Prostate gland (tissue), 2 donors: ENCODE measurements at regions of chr10 and their contacts with region 1.

Region 1: DNA sequence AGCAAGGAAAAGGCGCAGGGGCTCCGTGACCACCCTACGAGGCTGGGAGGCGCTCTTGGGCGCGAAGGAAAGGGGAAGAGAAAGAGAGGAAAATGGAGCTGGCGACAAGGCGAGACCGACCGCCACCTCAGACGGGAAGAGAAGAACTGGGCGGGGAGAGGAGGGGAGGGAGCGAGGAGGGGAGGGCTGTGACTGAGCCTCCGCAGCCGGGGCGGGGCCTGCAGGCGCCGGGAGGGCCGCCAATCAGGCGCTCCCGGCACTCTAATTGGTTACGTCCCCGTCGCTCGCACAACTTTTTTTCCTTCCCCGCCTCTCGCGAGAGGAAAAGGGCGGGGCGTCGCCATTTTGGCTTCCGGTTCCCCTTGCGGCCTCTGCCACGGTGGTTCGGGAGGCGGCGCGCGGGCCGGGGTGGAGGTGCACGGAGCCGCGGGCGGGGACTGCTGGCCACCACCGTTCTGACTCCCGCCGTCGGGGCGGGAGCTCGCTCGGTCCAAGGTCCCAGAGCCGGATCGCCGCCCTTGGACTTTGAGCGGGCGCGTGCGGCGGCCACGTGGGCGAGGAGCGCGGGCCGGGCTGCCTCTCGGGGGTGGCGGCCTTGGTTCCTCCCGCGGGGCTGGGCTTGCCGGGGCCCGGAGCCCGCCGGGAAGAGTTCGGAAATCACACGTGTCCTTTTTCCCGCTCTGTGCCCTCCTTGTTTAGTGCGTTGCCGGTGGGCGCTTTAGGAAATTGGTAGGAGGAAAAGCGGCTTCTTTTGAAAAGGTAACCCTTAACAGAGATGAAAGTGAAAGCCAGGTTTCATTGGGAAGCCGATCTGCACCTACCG is at the start of gene GDI2:
- DNase-seq: peak; percentile 95
- H3K4me3 ChIP-seq: peak within 1 kb of the TSS; percentile 74 to 95
- H3K27ac ChIP-seq: peak within 1 kb of the TSS; percentile 89 to 96
- H3K4me1 ChIP-seq: peaks cover 5% of the 10 kb centered on the region
- H3K27me3 ChIP-seq: no peaks in the 10 kb centered on the region
- CTCF ChIP-seq: peak in 1 of 4 experiments; percentile 28
- POLR2A ChIP-seq: peak; percentile 91
- total RNA-seq, gene GDI2: 186 to 218 TPM

Region 2: DNA sequence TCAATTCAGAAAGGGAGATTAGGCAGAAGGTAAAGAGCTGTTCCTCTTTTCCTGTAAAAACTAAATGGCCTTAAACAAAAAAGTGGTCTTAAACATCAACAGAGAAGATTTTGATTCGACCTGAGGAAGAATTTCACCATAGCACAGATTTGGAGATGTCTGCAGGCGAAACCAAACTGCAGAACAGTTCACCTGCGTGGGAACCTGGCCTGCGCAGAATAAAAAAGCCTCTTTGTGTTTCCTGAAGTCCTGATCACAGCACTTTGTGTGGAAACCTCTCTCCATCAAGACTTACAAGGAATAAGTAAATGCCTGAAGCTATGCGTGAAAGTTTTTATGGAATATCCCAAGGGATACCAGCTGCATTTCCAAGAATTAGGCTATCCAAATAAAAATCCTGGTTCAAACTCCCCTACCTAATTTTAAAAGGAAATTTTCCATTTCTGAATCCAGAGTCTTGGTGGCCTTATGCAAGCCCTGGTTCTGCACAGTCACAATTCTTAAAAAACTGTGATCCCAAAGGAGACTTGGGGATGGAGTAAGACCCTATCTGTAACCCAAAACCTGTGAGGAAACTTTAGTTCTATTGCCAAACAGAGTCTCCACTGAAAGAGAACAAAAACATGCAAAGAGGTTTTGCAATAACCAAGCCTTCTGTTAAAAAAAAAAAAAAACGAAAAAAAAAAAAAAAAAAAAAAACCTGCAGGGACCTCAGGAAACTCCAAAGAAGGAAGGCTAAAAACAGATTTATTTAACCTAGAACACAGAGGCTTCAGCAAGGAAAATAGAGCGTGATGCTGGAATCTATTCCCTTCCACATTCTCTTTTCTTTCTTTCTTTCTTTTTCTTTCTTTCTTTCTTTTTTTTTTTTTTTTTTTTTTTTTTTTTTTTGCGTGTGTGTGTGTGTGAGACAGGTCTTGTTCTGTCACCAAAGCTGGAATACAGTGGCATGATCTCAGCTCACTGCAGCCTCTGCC is 278.3 kb before region 1 on chr10:
- intact Hi-C with region 1: loop called (anchors 10 kb)
- DNase-seq: no peak
- H3K4me3 ChIP-seq: no peak overlapping the region
- H3K27ac ChIP-seq: peak overlapping the region in 1 of 2 donors; percentile 18
- H3K4me1 ChIP-seq: no peaks in the 10 kb centered on the region
- H3K27me3 ChIP-seq: no peaks in the 10 kb centered on the region
- CTCF ChIP-seq: no peak
- POLR2A ChIP-seq: no peak

Region 3: GRCh38 chr10:5684318-5684970 is 129.1 kb before region 1 on chr10 and contains the start of gene TASOR2:
- intact Hi-C with region 1: loop called (anchors 1 kb)
- DNase-seq: peak; percentile 94
- H3K4me3 ChIP-seq: peak within 1 kb of the TSS; percentile 87 to 96
- H3K27ac ChIP-seq: peak within 1 kb of the TSS; percentile 87 to 88
- H3K4me1 ChIP-seq: peaks cover 6% of the 10 kb centered on the region
- H3K27me3 ChIP-seq: no peaks in the 10 kb centered on the region
- CTCF ChIP-seq: peak in 1 of 4 experiments; percentile 23
- POLR2A ChIP-seq: peak; percentile 51
- total RNA-seq, gene TASOR2: 55.0 to 97.9 TPM

Region 4: GRCh38 chr10:5775685-5776084 is 37.8 kb before region 1 on chr10:
- intact Hi-C with region 1: no loop called
- DNase-seq: no peak
- H3K4me3 ChIP-seq: no peak overlapping the region
- H3K27ac ChIP-seq: no peak overlapping the region
- H3K4me1 ChIP-seq: peaks cover 2% of the 10 kb centered on the region
- H3K27me3 ChIP-seq: no peaks in the 10 kb centered on the region
- CTCF ChIP-seq: no peak
- POLR2A ChIP-seq: no peak

Region 5: DNA sequence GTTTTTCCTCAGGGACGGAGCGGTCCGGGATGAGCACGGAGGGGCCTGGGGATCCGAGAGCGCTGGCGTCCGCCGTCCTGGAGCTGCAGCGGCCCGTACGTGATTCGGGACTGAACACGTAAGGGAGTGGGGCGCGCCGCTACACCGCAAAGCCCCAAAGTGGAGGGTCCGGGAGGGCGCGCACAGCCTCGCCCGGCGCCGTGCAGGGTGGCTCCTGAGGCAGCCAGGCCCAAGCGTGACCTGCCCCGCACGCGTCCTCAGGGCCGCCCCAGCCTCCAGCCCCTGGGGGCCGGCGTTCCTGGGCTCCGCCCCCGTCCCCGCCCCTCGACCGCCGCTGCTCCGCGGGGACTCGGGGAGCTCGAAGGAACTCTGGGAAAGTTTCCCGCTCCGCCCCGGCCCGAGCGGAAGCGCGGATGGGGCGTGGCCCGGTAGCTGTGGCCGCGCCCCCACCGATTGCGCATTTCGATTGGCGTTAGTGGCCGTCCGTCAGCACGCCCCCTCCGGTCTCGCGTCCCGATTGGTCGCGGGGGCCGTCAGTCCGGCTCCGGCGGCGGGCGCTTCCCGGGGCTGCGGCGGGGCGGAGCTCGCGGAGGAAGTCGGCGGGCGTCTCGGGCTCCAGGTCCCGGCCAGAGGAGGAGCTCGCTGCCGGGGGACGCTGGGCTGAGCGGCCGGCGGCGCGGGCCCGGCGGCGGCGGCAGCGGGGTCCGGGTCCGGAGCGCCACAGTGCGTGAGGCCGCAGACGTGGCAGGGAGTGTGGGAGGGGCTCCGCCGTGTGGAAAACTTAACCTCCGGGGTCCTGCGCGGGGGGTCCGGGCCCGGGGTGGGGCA is 76.3 kb after region 1 on chr10 and contains the starts of genes ANKRD16 and FBH1:
- intact Hi-C with region 1: loop called (anchors 1 kb)
- DNase-seq: peak; percentile 99
- H3K4me3 ChIP-seq: peak within 1 kb of the TSS; percentile 85 to 94
- H3K27ac ChIP-seq: peak within 1 kb of the TSS; percentile 73 to 75
- H3K4me1 ChIP-seq: peaks cover 7% of the 10 kb centered on the region
- H3K27me3 ChIP-seq: no peaks in the 10 kb centered on the region
- CTCF ChIP-seq: peak in 1 of 4 experiments; percentile 39
- POLR2A ChIP-seq: peak; percentile 69
- total RNA-seq, gene ANKRD16: 14.4 to 20.1 TPM
- total RNA-seq, gene FBH1: 75.0 to 172 TPM